ENCODE measurements at regions of chr6 and their contacts with region 1.

Region 1: GRCh38 chr6:131761060-131761761 is 46.6 kb upstream of the ENPP1 start:
- DNase-seq: no peak
- H3K4me3 ChIP-seq: no peak overlapping the region
- H3K27ac ChIP-seq: peak overlapping the region; percentile 49 to 56
- H3K4me1 ChIP-seq: peaks cover 6 to 34% of the 10 kb centered on the region in 2 donors
- H3K27me3 ChIP-seq: no peaks in the 10 kb centered on the region
- CTCF ChIP-seq: no peak

Region 2: DNA sequence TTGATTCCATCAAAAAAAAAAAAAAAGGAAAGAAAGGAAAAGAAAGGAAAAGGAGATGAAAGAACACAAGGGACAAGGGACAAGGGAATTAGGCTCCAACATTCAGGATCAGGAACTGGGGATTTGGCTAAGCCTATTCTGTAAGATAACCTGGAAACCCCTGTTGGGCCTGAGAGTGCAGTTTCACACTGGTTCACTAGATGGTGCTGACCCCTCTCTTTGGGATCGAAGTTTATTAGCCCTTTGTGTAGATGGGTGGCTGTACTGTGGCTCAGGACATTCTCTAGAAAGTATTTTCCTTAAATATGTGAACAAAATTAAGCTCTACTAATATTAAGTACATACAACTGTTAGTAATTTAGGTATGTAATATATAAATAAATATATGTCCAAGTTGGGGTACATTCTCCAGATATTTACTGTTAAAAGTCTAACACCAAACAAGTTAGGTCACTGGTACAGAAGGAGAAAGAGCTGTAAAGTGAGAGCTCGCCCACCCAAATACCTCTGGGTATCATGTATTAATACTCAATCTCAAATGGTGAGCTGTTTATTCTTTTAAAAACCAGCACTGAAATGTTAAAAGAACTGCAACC is 66.3 kb before region 1 on chr6:
- intact Hi-C with region 1: no loop called
- DNase-seq: peak in 1 of 2 donors; percentile 68
- H3K4me3 ChIP-seq: no peak overlapping the region
- H3K27ac ChIP-seq: no peak overlapping the region
- H3K4me1 ChIP-seq: no peaks in the 10 kb centered on the region
- H3K27me3 ChIP-seq: no peaks in the 10 kb centered on the region
- CTCF ChIP-seq: peak; percentile 69 to 93 (median 84)

Region 3: DNA sequence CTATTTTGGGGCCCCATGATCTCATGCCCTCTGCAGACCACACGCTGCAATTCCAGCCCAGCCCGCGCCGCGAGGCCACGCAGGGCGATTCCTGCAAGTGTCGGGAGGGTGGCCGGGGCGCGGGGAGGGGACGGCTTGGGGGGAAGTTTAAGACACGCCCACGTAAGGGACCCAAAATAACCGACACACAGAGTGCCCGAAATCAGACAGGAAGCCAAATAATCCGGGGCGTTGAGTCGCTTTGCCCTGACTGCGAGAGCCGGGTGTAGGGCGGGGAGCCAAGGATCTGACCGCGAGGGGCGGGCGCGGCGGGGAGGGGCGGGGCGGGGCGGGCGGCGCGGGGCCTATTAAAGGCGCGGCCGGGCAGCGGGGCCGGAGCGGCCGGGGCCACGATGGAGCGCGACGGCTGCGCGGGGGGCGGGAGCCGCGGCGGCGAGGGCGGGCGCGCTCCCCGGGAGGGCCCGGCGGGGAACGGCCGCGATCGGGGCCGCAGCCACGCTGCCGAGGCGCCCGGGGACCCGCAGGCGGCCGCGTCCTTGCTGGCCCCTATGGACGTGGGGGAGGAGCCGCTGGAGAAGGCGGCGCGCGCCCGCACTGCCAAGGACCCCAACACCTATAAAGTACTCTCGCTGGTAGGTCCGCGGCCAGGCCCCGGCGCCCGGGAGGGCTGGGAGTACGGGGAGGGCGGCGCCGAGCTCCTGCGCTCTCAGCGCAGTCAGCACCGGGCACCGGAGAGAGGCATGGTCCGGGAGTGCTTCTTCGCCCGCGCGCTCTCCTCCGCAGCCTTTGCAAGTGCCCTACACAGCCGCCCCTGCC is 46.6 kb after region 1 on chr6 and contains the start of gene ENPP1:
- intact Hi-C with region 1: loop called (anchors 5 kb)
- DNase-seq: peak; percentile 53 to 93
- H3K4me3 ChIP-seq: peak within 1 kb of the TSS; percentile 65 to 67
- H3K27ac ChIP-seq: peak within 1 kb of the TSS; percentile 84 to 86
- H3K4me1 ChIP-seq: peaks cover 8 to 27% of the 10 kb centered on the region in 2 donors
- H3K27me3 ChIP-seq: no peaks in the 10 kb centered on the region
- CTCF ChIP-seq: peak; percentile 37 to 51 (median 49)
- total RNA-seq, gene ENPP1: 4.5 TPM

Region 4: GRCh38 chr6:131966443-131966842 is 205.2 kb after region 1 on chr6:
- intact Hi-C with region 1: no loop called
- DNase-seq: no peak
- H3K4me3 ChIP-seq: no peak overlapping the region
- H3K27ac ChIP-seq: no peak overlapping the region
- H3K4me1 ChIP-seq: no peaks in the 10 kb centered on the region
- H3K27me3 ChIP-seq: no peaks in the 10 kb centered on the region
- CTCF ChIP-seq: no peak